ENCODE measurements at regions of chr4 and their contacts with region 1.

Region 1: DNA sequence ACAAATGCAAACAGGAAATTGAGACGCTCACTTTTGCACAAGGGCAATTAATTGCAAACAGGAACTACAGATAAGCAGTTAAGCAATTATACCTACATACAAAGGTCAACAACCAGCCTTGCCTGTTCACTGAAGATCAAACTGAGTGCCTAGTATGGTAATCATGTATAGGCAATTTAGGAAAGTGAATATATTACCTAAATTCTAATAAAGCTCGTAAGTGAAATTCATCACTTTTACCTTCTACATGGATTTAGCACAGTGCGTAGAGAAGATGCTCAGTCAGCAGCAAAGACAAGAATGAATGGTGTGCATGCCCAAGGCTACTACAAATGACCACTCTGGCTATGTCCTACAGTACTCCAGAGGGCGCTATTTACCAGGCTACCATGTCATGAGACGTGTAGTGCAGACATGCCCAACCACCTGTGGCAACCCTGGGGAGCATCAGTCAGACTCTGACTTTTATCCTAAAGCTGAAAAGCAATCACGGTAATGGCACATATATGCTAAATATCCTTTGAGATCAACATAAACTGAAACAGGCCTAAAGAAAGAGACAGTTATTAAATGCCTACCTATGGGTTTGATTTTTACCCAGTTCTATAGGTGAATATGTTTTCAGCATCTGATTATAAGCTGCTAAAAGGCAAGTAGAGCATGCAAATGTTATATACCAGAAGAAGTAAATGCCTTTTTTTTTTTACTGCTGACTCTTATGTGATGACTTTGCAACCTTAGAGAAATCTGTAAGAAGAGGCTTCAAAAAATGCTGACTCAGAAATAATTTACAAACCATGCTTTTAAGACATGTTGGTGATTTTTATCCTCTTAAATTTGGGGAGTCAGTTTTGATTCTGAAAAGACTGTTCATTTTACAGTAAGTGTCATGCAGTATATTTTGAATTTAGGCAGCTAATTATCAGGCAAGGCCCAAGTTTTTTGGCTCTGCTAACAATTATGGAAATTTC is 178.0 kb downstream of the PPP3CA start:
- DNase-seq: peak; percentile 81
- H3K4me3 ChIP-seq: no peak overlapping the region
- H3K27ac ChIP-seq: no peak overlapping the region
- H3K4me1 ChIP-seq: no peaks in the 10 kb centered on the region
- H3K27me3 ChIP-seq: no peaks in the 10 kb centered on the region
- CTCF ChIP-seq: peak; percentile 86

Region 2: DNA sequence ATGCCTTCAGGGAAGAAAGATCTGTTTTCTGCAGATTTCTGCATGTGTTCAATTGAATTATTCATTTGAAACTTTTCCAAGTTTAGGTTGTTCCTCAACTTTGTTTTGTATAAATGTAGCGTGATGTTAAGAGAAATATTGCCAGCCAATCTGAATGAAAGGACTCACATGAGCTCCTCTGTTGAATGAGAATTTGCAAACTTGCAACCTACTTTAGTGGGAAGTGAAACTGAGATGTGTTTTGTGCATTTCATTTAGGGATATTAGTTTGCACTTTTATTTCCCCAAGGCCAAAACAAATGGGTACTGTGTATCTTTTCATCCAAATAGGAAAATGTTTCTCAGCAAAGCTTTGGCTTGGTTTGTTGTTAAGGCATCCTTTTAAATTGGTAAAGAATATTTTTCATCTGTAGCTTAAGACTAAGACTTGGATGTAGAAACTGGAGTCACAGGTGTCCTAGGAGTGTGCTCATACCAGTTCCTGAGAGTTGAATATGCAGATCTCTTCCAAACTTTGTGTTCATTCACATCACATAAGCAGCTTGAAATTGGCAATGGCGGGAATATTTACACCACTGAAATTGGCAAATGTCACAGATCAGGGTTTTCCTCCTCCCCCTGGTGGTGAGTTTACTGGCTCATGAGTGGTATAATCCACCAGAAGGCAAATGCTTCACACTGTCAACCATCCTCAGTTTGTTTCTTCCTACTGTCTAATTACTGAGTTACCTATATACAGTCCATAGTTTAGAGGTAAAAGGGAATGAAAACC is 427.6 kb after region 1 on chr4:
- intact Hi-C with region 1: loop called (anchors 10 kb)
- DNase-seq: no peak
- H3K4me3 ChIP-seq: no peak overlapping the region
- H3K27ac ChIP-seq: no peak overlapping the region
- H3K4me1 ChIP-seq: no peaks in the 10 kb centered on the region
- H3K27me3 ChIP-seq: no peaks in the 10 kb centered on the region
- CTCF ChIP-seq: no peak

Region 3: GRCh38 chr4:101730291-101731117 is 561.2 kb after region 1 on chr4:
- intact Hi-C with region 1: loop called (anchors 5 kb)
- DNase-seq: peak; percentile 71
- H3K4me3 ChIP-seq: no peak overlapping the region
- H3K27ac ChIP-seq: no peak overlapping the region
- H3K4me1 ChIP-seq: no peaks in the 10 kb centered on the region
- H3K27me3 ChIP-seq: no peaks in the 10 kb centered on the region
- CTCF ChIP-seq: peak; percentile 43

Measured in colonic mucosa (tissue), 4 donors.